PC-9 (cell line): ENCODE measurements at regions of chr2 and their contacts with region 1.

Region 1: GRCh38 chr2:231411831-231412617 is 16.5 kb downstream of the B3GNT7 start:
- DNase-seq: peak; percentile 86 to 92
- H3K4me3 ChIP-seq: peak overlapping the region; percentile 69
- H3K27ac ChIP-seq: peak overlapping the region; percentile 68
- H3K4me1 ChIP-seq: peaks cover 23% of the 10 kb centered on the region
- H3K27me3 ChIP-seq: no peaks in the 10 kb centered on the region
- CTCF ChIP-seq: peak; percentile 83

Region 2: DNA sequence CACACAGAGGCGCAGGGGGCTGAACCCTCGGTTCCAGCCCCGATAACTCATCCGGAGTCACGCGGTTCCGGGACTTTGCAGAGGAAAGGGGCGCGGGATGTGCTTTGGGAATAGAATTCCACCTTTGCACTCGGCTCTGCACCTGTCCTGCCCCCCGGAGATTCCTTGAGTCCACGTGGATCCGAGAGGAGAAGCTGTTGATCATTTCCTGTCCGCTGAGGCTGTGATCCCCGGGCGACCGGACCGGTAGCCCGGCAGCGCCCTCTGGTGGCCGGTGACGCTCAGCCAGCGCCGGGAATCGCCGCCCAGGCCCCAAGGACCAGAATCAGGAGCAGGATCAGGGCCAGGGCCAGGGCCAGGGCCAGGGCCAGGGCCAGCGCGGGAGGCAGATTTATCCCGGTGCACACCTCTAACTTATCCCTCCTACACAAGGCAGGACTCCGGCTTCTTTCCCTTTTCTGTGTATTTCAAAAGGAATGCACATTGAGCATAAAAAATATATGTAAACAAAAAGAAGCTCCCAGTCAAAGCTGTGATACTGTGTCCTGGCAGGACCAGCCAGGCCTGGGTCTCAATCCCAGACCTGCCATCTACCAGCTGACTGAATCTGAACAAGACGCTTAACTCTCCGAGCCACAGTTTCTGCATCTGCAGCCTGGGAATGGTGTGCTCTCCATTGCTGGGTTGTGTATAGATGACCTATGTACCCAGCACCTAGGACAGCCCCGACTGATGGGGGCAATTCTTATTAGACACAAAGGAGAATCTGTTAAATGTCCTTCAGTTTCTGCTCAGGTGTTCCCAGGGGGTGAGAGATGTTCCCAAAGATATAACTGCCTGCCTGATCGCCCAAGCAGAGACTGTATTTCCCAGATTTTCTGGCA is 424.6 kb before region 1 on chr2:
- CTCF ChIA-PET with region 1: no interaction called
- POLR2A ChIA-PET with region 1: no interaction called
- intact Hi-C with region 1: loop called (anchors 10 kb)
- DNase-seq: peak in 1 of 2 experiments; percentile 82
- H3K4me3 ChIP-seq: peak overlapping the region; percentile 64
- H3K27ac ChIP-seq: no peak overlapping the region
- H3K4me1 ChIP-seq: peaks cover 3% of the 10 kb centered on the region; the same call in 1 of the 2 replicates
- H3K27me3 ChIP-seq: peaks cover 6% of the 10 kb centered on the region
- CTCF ChIP-seq: peak; percentile 91

Region 3: DNA sequence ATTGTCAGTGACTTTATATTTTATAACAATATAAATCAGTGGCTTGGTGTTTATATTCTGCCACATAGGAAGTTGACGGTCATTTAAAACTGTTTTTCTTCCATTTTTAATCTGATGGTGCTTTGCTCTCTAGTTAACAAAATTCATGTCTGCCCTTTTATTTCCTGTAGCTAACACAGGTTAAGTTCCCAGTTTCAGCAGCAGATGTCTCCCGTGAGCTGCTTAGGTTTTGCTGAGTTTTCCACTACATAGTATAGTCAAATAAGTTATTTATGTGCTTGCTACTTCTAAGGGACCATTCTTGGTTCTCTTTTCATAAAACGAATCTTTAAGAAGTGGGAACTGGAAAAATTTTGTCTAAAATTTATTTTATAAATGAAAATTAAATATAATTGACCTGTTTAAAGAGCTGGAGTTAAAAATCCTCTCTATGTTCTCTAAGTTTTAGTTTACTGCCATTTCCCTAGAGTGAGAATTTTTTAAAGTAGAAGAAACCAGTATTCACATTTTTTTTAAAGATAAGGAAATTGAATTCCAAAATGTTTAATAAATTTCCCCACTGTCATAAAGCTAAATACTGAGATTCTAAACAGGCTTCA is 307.8 kb before region 1 on chr2:
- CTCF ChIA-PET with region 1: no interaction called
- POLR2A ChIA-PET with region 1: no interaction called
- intact Hi-C with region 1: loop called (anchors 1 kb)
- DNase-seq: peak in 1 of 2 experiments; percentile 31
- H3K4me3 ChIP-seq: no peak overlapping the region
- H3K27ac ChIP-seq: no peak overlapping the region
- H3K4me1 ChIP-seq: no peaks in the 10 kb centered on the region
- H3K27me3 ChIP-seq: no peaks in the 10 kb centered on the region
- CTCF ChIP-seq: peak; percentile 71

Region 4: DNA sequence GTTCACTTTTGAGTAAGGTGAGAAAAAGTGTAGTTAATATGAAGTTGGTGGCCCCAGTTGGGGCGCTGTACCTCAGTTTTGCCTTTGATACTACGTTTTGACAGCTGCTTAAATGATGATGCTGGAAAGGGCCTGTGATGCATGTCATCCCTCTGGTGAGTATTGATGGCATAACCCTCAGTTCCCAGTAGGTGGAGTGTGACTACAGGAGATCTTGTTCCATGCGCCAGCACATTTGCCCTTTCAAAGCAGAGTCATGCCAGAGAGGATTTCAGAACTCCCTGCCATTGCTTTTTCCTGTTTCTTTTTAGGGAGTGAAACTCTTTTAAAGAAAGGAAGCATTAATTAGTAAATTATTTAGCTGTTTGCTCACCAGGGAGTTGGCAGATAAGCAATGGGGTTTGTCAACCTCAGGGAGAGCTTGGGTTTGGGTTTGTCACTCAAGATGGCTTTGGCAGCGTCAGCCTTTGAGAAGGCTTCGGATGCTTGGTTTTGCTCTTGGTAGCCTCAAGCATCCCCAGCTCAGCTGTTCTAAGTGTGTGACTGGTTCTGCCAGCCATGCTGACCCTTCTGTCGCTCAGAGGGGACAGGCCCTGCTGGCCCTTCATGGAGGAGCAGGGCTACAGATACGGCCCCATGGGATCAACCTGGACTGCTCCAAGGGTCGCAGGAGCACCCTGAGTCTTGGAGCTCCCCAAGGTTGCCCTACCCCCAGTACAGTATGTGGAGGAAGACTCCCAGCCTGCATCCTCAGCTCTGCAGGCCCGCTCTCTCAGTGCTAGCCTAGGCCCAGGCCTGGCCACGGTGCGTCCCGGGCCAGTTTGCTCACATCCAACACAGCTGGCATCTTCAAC is 184.5 kb before region 1 on chr2:
- CTCF ChIA-PET with region 1: interaction called, 5 read pairs
- POLR2A ChIA-PET with region 1: no interaction called
- intact Hi-C with region 1: loop called (anchors 1 kb)
- DNase-seq: peak; percentile 52 to 65
- H3K4me3 ChIP-seq: no peak overlapping the region
- H3K27ac ChIP-seq: no peak overlapping the region
- H3K4me1 ChIP-seq: no peaks in the 10 kb centered on the region
- H3K27me3 ChIP-seq: no peaks in the 10 kb centered on the region
- CTCF ChIP-seq: peak; percentile 86

Region 5: GRCh38 chr2:231243866-231244265 is 168.2 kb before region 1 on chr2:
- CTCF ChIA-PET with region 1: no interaction called
- POLR2A ChIA-PET with region 1: no interaction called
- intact Hi-C with region 1: no loop called
- DNase-seq: no peak
- H3K4me3 ChIP-seq: no peak overlapping the region
- H3K27ac ChIP-seq: no peak overlapping the region
- H3K4me1 ChIP-seq: peaks cover 21% of the 10 kb centered on the region
- H3K27me3 ChIP-seq: no peaks in the 10 kb centered on the region
- CTCF ChIP-seq: no peak

Region 6: DNA sequence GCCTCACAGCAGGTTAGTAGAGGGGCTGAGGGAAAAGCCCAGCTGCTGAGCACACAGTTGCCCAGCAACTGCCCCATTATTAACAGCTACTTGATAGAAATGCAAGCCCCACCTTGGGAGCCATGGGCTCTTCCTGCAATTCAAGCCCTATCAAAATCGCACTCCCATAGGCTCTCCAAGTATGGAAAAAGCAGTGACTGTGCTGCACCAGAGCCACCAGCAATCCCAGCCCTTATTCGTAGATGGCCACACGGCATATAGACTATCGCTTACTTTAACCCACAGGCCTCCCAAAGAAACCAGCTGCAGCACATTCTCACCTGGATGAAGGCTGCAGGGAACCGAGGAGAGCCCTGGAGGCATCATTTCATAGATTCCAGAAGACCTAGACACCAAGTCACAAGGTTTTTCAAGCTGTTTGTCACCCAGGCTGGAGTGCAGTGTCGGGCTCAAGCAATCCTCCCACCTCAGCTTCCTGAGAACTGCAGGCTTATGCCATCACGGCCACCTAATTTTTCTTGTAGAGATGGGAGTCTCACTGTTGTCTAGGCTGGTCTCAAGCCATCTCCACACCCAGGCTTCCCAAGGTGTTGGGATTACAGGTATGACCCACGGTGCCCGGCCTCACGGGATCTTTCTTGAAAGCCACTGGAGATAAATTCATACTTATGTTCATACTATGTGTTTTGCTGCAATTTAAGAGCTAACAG is 40.9 kb after region 1 on chr2:
- CTCF ChIA-PET with region 1: interaction called, 3 read pairs
- POLR2A ChIA-PET with region 1: interaction called, 7 read pairs
- intact Hi-C with region 1: loop called (anchors 1 kb)
- DNase-seq: peak in 1 of 2 experiments; percentile 53
- H3K4me3 ChIP-seq: no peak overlapping the region
- H3K27ac ChIP-seq: peak overlapping the region; percentile 45
- H3K4me1 ChIP-seq: no peaks in the 10 kb centered on the region
- H3K27me3 ChIP-seq: no peaks in the 10 kb centered on the region
- CTCF ChIP-seq: no peak